Naive thymus-derived CD8-positive, alpha-beta T cell (primary cell): ENCODE measurements at regions of chr19 and their contacts with region 1.

Region 1: DNA sequence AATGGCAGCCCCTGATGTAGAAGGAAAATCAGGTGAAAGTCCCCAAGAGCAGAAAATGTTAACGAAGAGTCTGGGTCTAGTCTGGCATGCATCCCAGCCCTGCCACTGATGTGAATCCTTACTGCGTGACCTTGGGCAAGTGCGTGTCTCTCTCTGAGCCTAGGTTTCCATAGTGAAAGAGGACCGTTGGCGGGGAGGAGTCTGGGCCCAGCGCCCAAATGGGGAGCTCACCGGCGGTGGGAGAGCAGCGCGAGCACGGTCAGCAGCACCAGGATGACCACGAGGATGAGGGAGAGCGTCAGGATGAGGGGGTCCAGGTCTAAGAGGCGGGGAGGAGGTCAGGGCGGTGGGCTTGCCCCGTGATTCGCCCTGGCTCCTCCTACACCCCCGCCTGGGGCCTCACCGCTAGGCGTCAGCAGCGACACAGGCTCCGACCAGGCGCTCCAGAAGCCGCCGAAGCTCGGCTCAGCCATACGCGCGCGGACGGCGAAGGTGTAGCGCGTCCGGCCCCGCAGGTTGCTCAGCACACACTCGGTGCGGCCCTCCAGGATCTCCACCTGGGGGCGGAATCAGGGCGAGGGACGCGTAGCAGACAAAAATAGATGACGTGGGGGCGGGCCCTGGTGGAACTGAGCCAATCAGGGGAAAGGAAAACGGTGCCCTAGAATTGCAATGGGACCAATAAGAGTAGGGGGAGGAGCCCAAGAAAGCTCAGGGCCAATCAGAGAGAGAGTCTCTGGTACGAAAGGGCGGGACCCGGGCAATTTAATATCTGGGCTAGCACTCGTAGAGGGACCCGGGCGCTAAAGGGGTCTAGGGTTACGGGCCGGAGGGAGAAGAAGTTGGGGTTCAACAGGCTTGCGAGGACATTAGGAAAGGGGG is 3.2 kb downstream of the EPOR start:
- DNase-seq: peak; percentile 90 to 99 (median 98)
- ATAC-seq: peak; percentile 87 to 89
- H3K4me3 Mint-ChIP-seq: peak overlapping the region; percentile 84 to 99 (median 94)
- H3K27ac Mint-ChIP-seq: peak overlapping the region; percentile 89 to 99 (median 96)
- H3K4me1 Mint-ChIP-seq: peaks cover 21 to 55% (median 51%) of the 10 kb centered on the region in 4 donors
- H3K27me3 Mint-ChIP-seq: peaks cover 3 to 23% (median 10%) of the 10 kb centered on the region in 5 donors

Region 2: DNA sequence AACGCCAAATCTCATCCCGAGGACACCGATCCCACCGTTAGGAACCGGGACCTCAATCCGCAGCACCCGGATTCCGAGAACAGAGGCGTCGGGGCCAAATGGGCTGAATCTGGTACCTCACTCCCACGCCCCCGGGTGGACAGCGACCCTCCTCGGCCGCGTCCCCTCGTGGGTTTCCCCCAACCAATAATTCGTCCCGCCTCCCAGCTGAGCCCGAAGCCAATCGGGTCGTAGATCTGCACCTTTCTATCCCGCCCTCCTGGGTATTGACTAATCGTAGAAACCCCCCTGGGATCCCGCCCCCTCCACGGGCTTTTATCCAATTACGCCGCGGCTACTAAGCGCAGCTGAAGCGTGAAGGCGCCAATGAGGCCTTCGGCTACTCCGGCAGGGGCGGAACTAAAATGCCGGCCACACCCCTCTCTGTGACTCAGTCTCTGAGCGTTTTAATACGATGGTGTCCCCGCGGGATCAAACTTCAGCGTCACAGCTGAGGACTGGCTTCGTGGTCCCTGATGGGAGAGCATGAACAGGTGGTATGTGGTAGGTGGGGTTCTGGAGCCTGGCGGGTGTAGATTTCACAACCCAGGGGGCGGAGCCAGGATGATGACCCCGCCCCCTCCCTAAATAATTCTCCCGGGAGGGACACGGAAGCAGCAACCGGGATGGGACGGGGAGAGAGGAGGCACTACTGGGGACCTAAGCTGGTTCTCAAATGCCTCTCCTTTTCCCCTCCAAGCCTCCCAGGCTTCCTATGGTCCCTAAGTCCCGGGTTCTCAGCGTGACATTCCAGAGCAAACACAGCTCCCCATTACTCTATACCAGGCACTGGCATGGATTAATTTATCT is 34.6 kb before region 1 on chr19 and contains the starts of genes CCDC159 and TMEM205:
- POLR2A ChIA-PET with region 1: interaction called, 40 read pairs
- DNase-seq: peak; percentile 88 to 99 (median 98)
- ATAC-seq: peak; percentile 97 to 99
- H3K4me3 Mint-ChIP-seq: peak within 1 kb of the TSS; percentile 89 to 99 (median 94)
- H3K27ac Mint-ChIP-seq: peak within 1 kb of the TSS; percentile 85 to 98 (median 92)
- H3K4me1 Mint-ChIP-seq: peaks cover 20 to 36% (median 33%) of the 10 kb centered on the region in 4 donors
- H3K27me3 Mint-ChIP-seq: no peaks in the 10 kb centered on the region
- polyA plus RNA-seq, gene CCDC159: 13.7 to 16.8 (median 15.0) TPM
- polyA plus RNA-seq, gene TMEM205: 56.6 to 76.1 (median 66.8) TPM

Region 3: DNA sequence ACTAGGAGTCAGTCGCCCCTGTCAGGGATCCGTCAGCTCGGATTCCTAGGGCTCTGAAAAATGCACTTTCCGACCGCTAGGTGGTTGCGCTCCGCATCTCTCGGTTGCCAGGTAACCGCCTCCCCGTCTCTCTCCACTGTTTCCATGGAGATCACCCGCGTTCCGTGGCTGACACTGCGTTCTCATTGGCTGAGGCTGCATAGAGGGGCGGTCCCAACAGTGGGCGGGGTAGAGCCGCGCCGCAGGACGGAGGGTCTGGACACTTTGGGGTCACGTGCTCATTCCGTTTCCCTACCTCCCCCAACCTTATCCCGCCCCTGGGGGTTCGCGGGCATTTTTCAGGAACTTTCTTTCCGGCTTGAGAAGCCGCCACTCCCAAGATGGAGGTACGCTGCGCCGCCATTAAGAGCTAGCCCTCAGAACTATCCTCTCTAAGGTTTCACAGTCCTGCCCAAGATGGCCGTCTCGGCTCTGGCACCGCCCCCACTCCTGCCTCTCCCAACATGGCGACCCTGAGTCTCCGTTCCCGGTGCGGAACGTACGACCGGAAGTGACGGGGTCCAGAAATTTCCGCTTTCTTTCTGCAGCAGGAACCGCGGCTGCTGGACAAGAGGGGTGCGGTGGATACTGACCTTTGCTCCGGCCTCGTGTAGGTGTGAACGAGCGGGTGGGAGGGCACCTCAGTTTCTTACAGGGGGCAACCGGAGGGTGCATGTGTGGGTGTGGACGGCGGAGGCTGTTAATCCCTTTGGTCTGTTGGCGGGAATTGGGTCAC is 54.4 kb after region 1 on chr19 and contains the starts of genes ODAD3 and PRKCSH:
- POLR2A ChIA-PET with region 1: interaction called, 31 read pairs
- DNase-seq: peak; percentile 86 to 99 (median 98)
- ATAC-seq: peak; percentile 95 to 96
- H3K4me3 Mint-ChIP-seq: peak within 1 kb of the TSS; percentile 98 to 100 (median 99)
- H3K27ac Mint-ChIP-seq: peak within 1 kb of the TSS; percentile 93 to 99 (median 98)
- H3K4me1 Mint-ChIP-seq: peaks cover 8 to 37% (median 22%) of the 10 kb centered on the region in 4 donors
- H3K27me3 Mint-ChIP-seq: peaks cover 0 to 8% (median 2%) of the 10 kb centered on the region in 5 donors
- polyA plus RNA-seq, gene ODAD3: not detected
- polyA plus RNA-seq, gene PRKCSH: 23.5 to 58.7 (median 28.0) TPM

Region 4: DNA sequence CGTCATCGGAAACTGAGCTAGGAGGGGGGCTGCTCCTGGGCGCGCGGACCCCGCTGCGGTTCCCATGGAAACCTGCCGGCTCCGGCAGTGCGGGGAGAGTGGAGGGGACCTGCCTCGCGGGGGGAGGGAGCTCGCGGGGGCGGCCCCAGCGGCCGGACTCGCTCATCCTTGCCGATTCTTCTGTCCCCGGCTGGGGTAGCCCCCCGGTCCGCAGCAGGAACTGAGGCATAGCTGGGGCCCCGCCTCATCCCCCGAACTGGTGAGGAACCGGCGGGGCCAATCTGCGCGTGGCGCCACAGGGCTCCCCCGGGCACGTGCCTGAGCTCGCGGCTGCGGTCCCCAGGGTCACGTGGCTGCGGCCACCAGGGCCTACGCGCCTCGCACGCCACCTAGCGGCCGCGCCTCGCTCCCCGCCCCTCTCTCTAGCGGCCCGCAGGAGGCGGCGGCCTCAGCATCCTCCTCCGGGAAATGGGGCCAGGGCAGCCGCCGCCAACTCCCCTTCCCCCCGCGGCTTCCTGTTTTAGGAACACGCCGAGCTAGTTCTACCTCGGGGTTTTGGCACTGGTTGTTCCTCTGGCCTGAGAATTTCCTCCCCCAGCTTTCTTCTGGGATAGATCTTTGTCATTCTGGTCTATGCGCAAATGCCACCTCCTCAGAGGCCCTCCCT is 101.6 kb after region 1 on chr19:
- POLR2A ChIA-PET with region 1: interaction called, 18 read pairs
- DNase-seq: peak; percentile 72 to 89 (median 82)
- ATAC-seq: peak; percentile 75 to 81
- H3K4me3 Mint-ChIP-seq: peak overlapping the region; percentile 45 to 78 (median 70)
- H3K27ac Mint-ChIP-seq: peak overlapping the region in 3 of 10 donors; percentile 29 to 71 (median 63)
- H3K4me1 Mint-ChIP-seq: peaks cover 9 to 29% (median 23%) of the 10 kb centered on the region in 4 donors
- H3K27me3 Mint-ChIP-seq: peaks cover 11 to 40% (median 25%) of the 10 kb centered on the region in 5 donors